ENCODE measurements at regions of chr6 and their contacts with region 1.

Region 1: DNA sequence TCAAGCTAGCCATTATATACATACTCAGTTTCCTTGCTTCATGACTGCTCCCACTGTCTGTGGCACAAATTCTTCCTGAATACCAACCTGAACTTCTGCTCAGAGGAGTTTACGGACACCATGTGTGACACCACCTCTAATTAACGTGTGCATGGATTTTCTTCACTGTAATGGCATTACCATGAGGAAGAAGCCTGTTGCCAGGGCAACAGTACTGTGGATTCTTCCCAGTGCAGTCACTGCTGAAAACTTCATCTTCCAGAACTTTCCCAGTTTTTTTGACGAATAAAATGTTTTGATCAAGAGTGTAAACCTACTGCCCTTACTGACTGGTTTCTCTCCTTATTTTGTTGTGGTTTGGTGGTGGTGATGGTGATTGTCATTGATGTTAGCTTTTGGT is 444.3 kb upstream of the NRSN1 start:
- DNase-seq: no peak
- ATAC-seq: no peak
- H3K4me3 ChIP-seq: no peak overlapping the region
- H3K4me3 Mint-ChIP-seq: no peak overlapping the region
- H3K27ac ChIP-seq: no peak overlapping the region
- H3K27ac Mint-ChIP-seq: no peak overlapping the region
- H3K4me1 ChIP-seq: no peaks in the 10 kb centered on the region
- H3K4me1 Mint-ChIP-seq: no peaks in the 10 kb centered on the region
- H3K27me3 ChIP-seq: no peaks in the 10 kb centered on the region
- H3K27me3 Mint-ChIP-seq: no peaks in the 10 kb centered on the region

Region 2: DNA sequence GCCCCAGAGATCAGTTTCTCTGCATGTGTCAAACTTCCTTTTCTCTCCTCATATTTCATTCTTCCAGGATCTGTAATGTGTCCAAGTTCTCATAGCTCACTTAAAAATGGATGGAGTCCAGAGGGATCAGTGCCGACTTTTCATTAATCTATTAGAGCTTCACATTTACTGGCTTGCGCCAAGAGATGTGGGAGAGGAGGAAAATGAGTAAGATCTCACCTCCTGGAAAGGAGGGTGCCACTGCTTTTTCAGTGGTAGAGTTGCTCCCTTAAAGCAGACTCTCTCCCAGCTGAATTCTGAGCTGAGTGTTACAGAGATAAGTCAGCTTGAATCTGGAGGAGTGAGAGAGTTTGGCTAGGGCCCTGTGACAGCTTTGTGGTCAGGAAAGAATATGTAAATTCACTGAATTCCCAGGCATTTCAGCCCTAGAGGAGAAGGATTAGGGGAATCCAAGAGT is 1912.3 kb before region 1 on chr6:
- CTCF ChIA-PET with region 1: no interaction called
- POLR2A ChIA-PET with region 1: interaction called in 1 of 2 experiments, 14 read pairs
- DNase-seq: no peak
- ATAC-seq: no peak
- H3K4me3 ChIP-seq: no peak overlapping the region
- H3K4me3 Mint-ChIP-seq: no peak overlapping the region
- H3K27ac ChIP-seq: no peak overlapping the region
- H3K27ac Mint-ChIP-seq: no peak overlapping the region
- H3K4me1 ChIP-seq: no peaks in the 10 kb centered on the region
- H3K4me1 Mint-ChIP-seq: no peaks in the 10 kb centered on the region
- H3K27me3 ChIP-seq: no peaks in the 10 kb centered on the region
- H3K27me3 Mint-ChIP-seq: peaks cover 0 to 5% of the 10 kb centered on the region in 2 donors

Region 3: GRCh38 chr6:23250556-23250955 is 431.2 kb before region 1 on chr6:
- CTCF ChIA-PET with region 1: no interaction called
- POLR2A ChIA-PET with region 1: no interaction called
- DNase-seq: no peak
- ATAC-seq: no peak
- H3K4me3 ChIP-seq: no peak overlapping the region
- H3K4me3 Mint-ChIP-seq: no peak overlapping the region
- H3K27ac ChIP-seq: no peak overlapping the region
- H3K27ac Mint-ChIP-seq: no peak overlapping the region
- H3K4me1 ChIP-seq: no peaks in the 10 kb centered on the region
- H3K4me1 Mint-ChIP-seq: no peaks in the 10 kb centered on the region
- H3K27me3 ChIP-seq: no peaks in the 10 kb centered on the region
- H3K27me3 Mint-ChIP-seq: no peaks in the 10 kb centered on the region

Measured in T-cell (primary cell).